Aorta (tissue), 5 donors: ENCODE measurements at regions of chr5 and their contacts with region 1.

Region 1: GRCh38 chr5:57499262-57500050 is 16.8 kb upstream of the ACTBL2 start:
- DNase-seq: no peak
- ATAC-seq: no peak
- H3K4me3 ChIP-seq: no peak overlapping the region
- H3K27ac ChIP-seq: no peak overlapping the region
- H3K4me1 ChIP-seq: peaks cover 10 to 18% of the 10 kb centered on the region in 2 donors
- H3K27me3 ChIP-seq: no peaks in the 10 kb centered on the region

Region 2: GRCh38 chr5:57298295-57298984 is 201.0 kb before region 1 on chr5:
- intact Hi-C with region 1: loop called in 1 of 2 experiments (anchors 5 kb)
- DNase-seq: peak; percentile 85 to 86
- ATAC-seq: peak; percentile 93
- H3K4me3 ChIP-seq: no peak overlapping the region
- H3K27ac ChIP-seq: peak overlapping the region in 1 of 2 donors; percentile 30
- H3K4me1 ChIP-seq: peaks cover 0 to 3% of the 10 kb centered on the region in 2 donors
- H3K27me3 ChIP-seq: no peaks in the 10 kb centered on the region

Region 3: GRCh38 chr5:57408714-57409113 is 90.7 kb before region 1 on chr5:
- intact Hi-C with region 1: loop called in 1 of 2 experiments (anchors 10 kb)
- DNase-seq: no peak
- ATAC-seq: peak; percentile 56
- H3K4me3 ChIP-seq: no peak overlapping the region
- H3K27ac ChIP-seq: peak overlapping the region in 1 of 2 donors; percentile 98
- H3K4me1 ChIP-seq: peaks cover 16 to 24% of the 10 kb centered on the region in 2 donors
- H3K27me3 ChIP-seq: no peaks in the 10 kb centered on the region

Region 4: GRCh38 chr5:57779383-57780223 is 280.1 kb after region 1 on chr5:
- intact Hi-C with region 1: loop called in 1 of 2 experiments (anchors 5 kb)
- DNase-seq: no peak
- ATAC-seq: peak; percentile 81
- H3K4me3 ChIP-seq: no peak overlapping the region
- H3K27ac ChIP-seq: no peak overlapping the region
- H3K4me1 ChIP-seq: peaks cover 2 to 7% of the 10 kb centered on the region in 2 donors
- H3K27me3 ChIP-seq: no peaks in the 10 kb centered on the region